Uterus (tissue), 4 donors: ENCODE measurements at regions of chr1 and their contacts with region 1.

Region 1: GRCh38 chr1:114282751-114283403 is 129.2 kb upstream of the SYT6 start:
- DNase-seq: peak; percentile 86 to 89
- H3K4me3 ChIP-seq: no peak overlapping the region
- H3K27ac ChIP-seq: no peak overlapping the region
- H3K4me1 ChIP-seq: no peaks in the 10 kb centered on the region
- H3K27me3 ChIP-seq: no peaks in the 10 kb centered on the region
- CTCF ChIP-seq: peak; percentile 74 to 82 (median 78)
- POLR2A ChIP-seq: no peak

Region 2: GRCh38 chr1:113978863-113979702 is 303.8 kb before region 1 on chr1 and contains the start of gene OLFML3:
- intact Hi-C with region 1: loop called (anchors 5 kb)
- DNase-seq: peak; percentile 91 to 95
- H3K4me3 ChIP-seq: peak within 1 kb of the TSS; percentile 33 to 44
- H3K27ac ChIP-seq: peak within 1 kb of the TSS; percentile 92
- H3K4me1 ChIP-seq: peaks cover 0 to 28% of the 10 kb centered on the region in 2 donors
- H3K27me3 ChIP-seq: no peaks in the 10 kb centered on the region
- CTCF ChIP-seq: peak; percentile 57 to 76 (median 72)
- POLR2A ChIP-seq: peak in 1 of 2 donors; percentile 79
- total RNA-seq, gene OLFML3: 86.6 to 302 (median 122) TPM